ENCODE measurements at regions of chr11 and their contacts with region 1.

Region 1: GRCh38 chr11:122695076-122695615 is 39.6 kb downstream of the UBASH3B start:
- DNase-seq: no peak
- H3K4me3 ChIP-seq: no peak overlapping the region
- H3K27me3 ChIP-seq: no peaks in the 10 kb centered on the region
- CTCF ChIP-seq: no peak

Region 2: DNA sequence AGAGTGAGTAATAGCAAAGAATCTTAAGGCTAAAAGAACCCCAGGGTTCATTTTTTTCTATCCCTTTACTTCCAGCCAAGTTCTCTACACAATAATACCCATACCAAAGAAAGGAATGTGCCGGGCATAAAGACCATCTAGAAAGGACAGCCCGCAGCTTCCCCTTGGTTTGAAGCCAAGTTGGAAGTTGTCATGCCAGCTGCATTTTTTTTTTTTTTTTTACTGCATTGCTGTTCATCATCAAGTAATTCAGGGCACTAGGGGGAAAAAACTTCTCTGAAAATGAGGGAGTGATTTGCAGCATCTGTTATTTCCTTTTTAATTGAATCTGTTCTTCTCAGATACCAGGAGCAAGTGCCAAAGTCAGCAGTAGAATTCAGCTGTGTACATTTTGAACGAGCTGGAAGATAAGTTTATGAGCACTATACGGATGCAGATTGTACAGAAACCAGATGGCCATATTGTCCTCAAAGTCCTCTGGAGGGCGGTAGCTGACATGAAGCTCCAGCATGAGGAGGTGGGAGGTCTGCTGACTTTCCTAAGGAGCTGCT is 16.8 kb after region 1 on chr11:
- CTCF ChIA-PET with region 1: interaction called, 3 read pairs
- POLR2A ChIA-PET with region 1: interaction called, 14 read pairs
- DNase-seq: no peak
- H3K4me3 ChIP-seq: no peak overlapping the region
- H3K27me3 ChIP-seq: no peaks in the 10 kb centered on the region
- CTCF ChIP-seq: peak; percentile 27; the same call in 1 of the 2 replicates